GM12878 (cell line): ENCODE measurements at regions of chr20 and their contacts with region 1.

Region 1: GRCh38 chr20:33666293-33667244 is at the start of gene ACTL10:
- DNase-seq: peak; percentile 91
- ATAC-seq: peak; percentile 80
- H3K4me3 ChIP-seq: peak within 1 kb of the TSS; percentile 75
- H3K27ac ChIP-seq: peak within 1 kb of the TSS; percentile 65
- H3K4me1 ChIP-seq: peaks cover 29% of the 10 kb centered on the region
- H3K27me3 ChIP-seq: no peaks in the 10 kb centered on the region
- CTCF ChIP-seq: peak in 2 of 3 experiments; percentile 15 to 28; a peak in 2 of 6 replicates
- EP300 ChIP-seq: no peak
- POLR2A ChIP-seq: peak; percentile 79
- RAD21 ChIP-seq: no peak
- polyA plus RNA-seq, gene ACTL10: 0.16 to 0.46 TPM

Region 2: GRCh38 chr20:33401184-33401920 is 265.2 kb before region 1 on chr20 and contains the start of gene CDK5RAP1:
- CTCF ChIA-PET with region 1: interaction called, 10 read pairs
- POLR2A ChIA-PET with region 1: interaction called, 3 read pairs
- RAD21 ChIA-PET with region 1: interaction called, 9 read pairs
- SMC1A ChIA-PET with region 1: interaction called, 6 read pairs
- in situ Hi-C with region 1: no loop called
- intact Hi-C with region 1: no loop called
- DNase-seq: peak; percentile 74
- ATAC-seq: peak; percentile 97
- H3K4me3 ChIP-seq: peak within 1 kb of the TSS; percentile 80
- H3K27ac ChIP-seq: peak within 1 kb of the TSS; percentile 68
- H3K4me1 ChIP-seq: peaks cover 10% of the 10 kb centered on the region
- H3K27me3 ChIP-seq: no peaks in the 10 kb centered on the region
- CTCF ChIP-seq: no peak
- EP300 ChIP-seq: no peak
- POLR2A ChIP-seq: peak; percentile 89
- RAD21 ChIP-seq: no peak
- polyA plus RNA-seq, gene CDK5RAP1: 61.2 to 67.6 TPM

Region 3: GRCh38 chr20:33460711-33461110 is 205.9 kb before region 1 on chr20:
- CTCF ChIA-PET with region 1: interaction called, 43 read pairs
- POLR2A ChIA-PET with region 1: interaction called, 5 read pairs
- RAD21 ChIA-PET with region 1: interaction called, 25 read pairs
- SMC1A ChIA-PET with region 1: interaction called, 7 read pairs
- in situ Hi-C with region 1: no loop called
- intact Hi-C with region 1: loop called (anchors 1 kb)
- DNase-seq: no peak
- ATAC-seq: peak; percentile 38
- H3K4me3 ChIP-seq: no peak overlapping the region
- H3K27ac ChIP-seq: no peak overlapping the region
- H3K4me1 ChIP-seq: no peaks in the 10 kb centered on the region
- H3K27me3 ChIP-seq: no peaks in the 10 kb centered on the region
- CTCF ChIP-seq: no peak
- EP300 ChIP-seq: no peak
- POLR2A ChIP-seq: no peak
- RAD21 ChIP-seq: no peak

Region 4: GRCh38 chr20:33606118-33606771 is 60.3 kb before region 1 on chr20:
- CTCF ChIA-PET with region 1: interaction called, 7 read pairs
- POLR2A ChIA-PET with region 1: interaction called, 10 read pairs
- RAD21 ChIA-PET with region 1: interaction called, 5 read pairs
- SMC1A ChIA-PET with region 1: interaction called, 4 read pairs
- in situ Hi-C with region 1: no loop called
- intact Hi-C with region 1: no loop called
- DNase-seq: peak; percentile 51
- ATAC-seq: peak; percentile 88
- H3K4me3 ChIP-seq: peak overlapping the region; percentile 6; the same call in 1 of the 2 replicates
- H3K27ac ChIP-seq: peak overlapping the region; percentile 16
- H3K4me1 ChIP-seq: peaks cover 45% of the 10 kb centered on the region
- H3K27me3 ChIP-seq: no peaks in the 10 kb centered on the region
- CTCF ChIP-seq: no peak
- EP300 ChIP-seq: no peak
- POLR2A ChIP-seq: no peak
- RAD21 ChIP-seq: no peak

Region 5: GRCh38 chr20:33653218-33653899 is 13.2 kb before region 1 on chr20:
- CTCF ChIA-PET with region 1: interaction called, 41 read pairs
- POLR2A ChIA-PET with region 1: interaction called, 4 read pairs
- RAD21 ChIA-PET with region 1: interaction called, 13 read pairs
- SMC1A ChIA-PET with region 1: interaction called, 20 read pairs
- in situ Hi-C with region 1: no loop called
- intact Hi-C with region 1: no loop called
- DNase-seq: no peak
- ATAC-seq: peak; percentile 82
- H3K4me3 ChIP-seq: no peak overlapping the region
- H3K27ac ChIP-seq: 0 out of 2 replicates have a peak overlapping the region, but pooled peaks have one; percentile 11
- H3K4me1 ChIP-seq: peaks cover 23% of the 10 kb centered on the region
- H3K27me3 ChIP-seq: peaks cover 0 to 2% of the 10 kb centered on the region in 2 experiments; a peak in 2 of 4 replicates
- CTCF ChIP-seq: peak; percentile 82 to 88 (median 87)
- EP300 ChIP-seq: no peak
- POLR2A ChIP-seq: no peak
- RAD21 ChIP-seq: peak; percentile 93

Region 6: DNA sequence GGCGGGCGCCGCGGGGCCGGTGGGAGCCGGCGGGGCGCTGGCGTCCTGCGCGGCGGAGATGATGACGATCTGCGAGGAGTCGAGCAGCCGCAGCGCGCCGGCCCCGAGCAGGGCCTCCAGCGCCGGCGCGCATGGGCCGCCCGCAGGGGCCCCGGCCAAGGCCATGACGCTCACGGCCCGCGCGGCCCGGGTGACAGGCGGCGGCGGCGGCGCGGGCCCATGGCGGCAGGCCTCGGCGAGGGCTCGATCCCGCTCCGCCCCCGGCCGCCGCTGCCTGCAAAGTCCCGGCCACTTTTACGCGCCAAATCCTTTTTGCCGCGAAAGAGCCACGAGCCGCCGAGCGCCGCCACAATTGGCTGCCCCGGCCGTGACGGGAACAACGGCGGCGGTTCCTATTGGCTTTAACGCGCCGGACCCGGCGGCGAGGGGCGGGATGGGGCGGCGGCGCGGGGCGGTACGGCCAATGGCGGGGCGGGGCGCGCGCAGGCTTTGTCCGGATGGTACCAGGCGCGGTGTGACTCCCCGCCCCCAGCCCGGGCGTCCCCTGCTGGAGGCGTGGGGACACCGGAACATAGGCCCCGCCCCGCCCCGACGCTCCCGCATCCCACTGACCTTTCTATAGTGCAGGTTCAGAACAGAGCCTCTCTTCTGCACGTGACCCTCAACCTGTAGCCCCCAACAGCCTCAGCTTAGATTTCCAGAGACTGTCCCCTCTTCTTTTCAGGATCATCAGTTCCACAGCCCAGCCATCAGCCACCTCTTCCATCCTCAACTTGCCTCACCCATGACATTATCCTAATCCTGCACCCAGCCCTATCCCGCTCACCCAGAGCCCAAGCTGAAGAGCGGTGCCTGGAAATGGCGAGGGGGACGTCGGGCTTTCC is 19.8 kb after region 1 on chr20 and contains the start of gene E2F1:
- CTCF ChIA-PET with region 1: interaction called, 38 read pairs
- POLR2A ChIA-PET with region 1: interaction called, 5 read pairs
- RAD21 ChIA-PET with region 1: interaction called, 7 read pairs
- SMC1A ChIA-PET with region 1: interaction called, 5 read pairs
- in situ Hi-C with region 1: no loop called
- intact Hi-C with region 1: no loop called
- DNase-seq: peak; percentile 61
- ATAC-seq: peak; percentile 95
- H3K4me3 ChIP-seq: peak within 1 kb of the TSS; percentile 79
- H3K27ac ChIP-seq: peak within 1 kb of the TSS; percentile 88
- H3K4me1 ChIP-seq: peaks cover 33% of the 10 kb centered on the region
- H3K27me3 ChIP-seq: no peaks in the 10 kb centered on the region
- CTCF ChIP-seq: peak in 2 of 3 experiments; percentile 21 to 28; a peak in 2 of 6 replicates
- EP300 ChIP-seq: no peak
- POLR2A ChIP-seq: peak; percentile 57; the same call in 1 of the 2 replicates
- RAD21 ChIP-seq: no peak
- polyA plus RNA-seq, gene E2F1: 0.29 to 2.1 TPM

Region 7: GRCh38 chr20:34129518-34130162 is 463.1 kb after region 1 on chr20:
- CTCF ChIA-PET with region 1: no interaction called
- POLR2A ChIA-PET with region 1: no interaction called
- RAD21 ChIA-PET with region 1: no interaction called
- SMC1A ChIA-PET with region 1: no interaction called
- in situ Hi-C with region 1: no loop called
- intact Hi-C with region 1: loop called (anchors 10 kb)
- DNase-seq: peak; percentile 9
- ATAC-seq: peak; percentile 96
- H3K4me3 ChIP-seq: no peak overlapping the region
- H3K27ac ChIP-seq: no peak overlapping the region
- H3K4me1 ChIP-seq: peaks cover 1% of the 10 kb centered on the region; the same call in 1 of the 2 replicates
- H3K27me3 ChIP-seq: peaks cover 0 to 2% of the 10 kb centered on the region in 2 experiments; a peak in 2 of 4 replicates
- CTCF ChIP-seq: peak; percentile 73 to 90 (median 76)
- EP300 ChIP-seq: no peak
- POLR2A ChIP-seq: no peak
- RAD21 ChIP-seq: peak; percentile 97